A549 (cell line): ENCODE measurements at regions of chr14 and their contacts with region 1.

Region 1: GRCh38 chr14:54503476-54504257 is 6.0 kb upstream of the CGRRF1 start:
- DNase-seq: peak in 1 of 2 experiments; percentile 66
- ATAC-seq: peak; percentile 80 to 89
- H3K4me3 ChIP-seq: no peak overlapping the region
- H3K27ac ChIP-seq: 0 out of 6 replicates have a peak overlapping the region, but pooled peaks of 1 of the 2 experiments have one; percentile 39
- H3K4me1 ChIP-seq: no peaks in the 10 kb centered on the region; the same call in 2 of the 3 replicates
- CTCF ChIP-seq: peak; percentile 46
- EP300 ChIP-seq: no peak
- POLR2A ChIP-seq: no peak
- RAD21 ChIP-seq: peak; percentile 39 to 54; a peak in 4 of 5 replicates

Region 2: DNA sequence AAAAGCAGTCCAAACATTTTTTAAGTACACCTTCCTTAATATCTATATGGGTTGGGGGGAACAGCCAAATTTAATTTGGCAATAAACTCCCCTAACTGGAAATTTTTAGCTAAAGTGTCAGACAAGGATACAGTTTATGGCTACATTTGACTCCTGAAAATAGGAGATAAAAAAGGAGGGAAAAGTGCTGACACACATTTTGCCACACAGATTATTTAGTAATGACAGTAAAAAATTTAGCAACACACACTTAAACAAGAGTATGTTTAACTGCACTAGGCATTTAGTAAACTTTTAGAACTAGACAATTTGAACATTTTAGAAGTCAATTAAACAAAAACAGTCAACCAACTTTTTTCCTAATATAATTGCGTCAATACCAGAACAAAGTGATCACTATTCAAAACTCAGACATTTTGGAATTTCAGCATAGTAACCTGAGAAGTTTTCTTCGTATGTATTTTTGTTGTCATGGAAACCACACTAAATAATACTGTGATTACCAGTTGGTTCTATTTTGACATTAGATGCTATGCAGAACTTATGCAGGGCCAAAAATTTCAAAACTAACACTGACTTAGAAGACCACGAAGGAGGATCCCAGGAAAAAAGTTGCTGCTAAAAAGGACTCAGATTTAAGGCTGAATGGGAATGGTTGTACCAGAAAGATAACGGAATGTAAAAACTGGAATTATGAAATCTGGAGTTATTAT is 28.3 kb before region 1 on chr14:
- CTCF ChIA-PET with region 1: no interaction called
- POLR2A ChIA-PET with region 1: no interaction called
- DNase-seq: no peak
- ATAC-seq: no peak
- H3K4me3 ChIP-seq: no peak overlapping the region
- H3K27ac ChIP-seq: no peak overlapping the region
- H3K4me1 ChIP-seq: peaks cover 9% of the 10 kb centered on the region
- CTCF ChIP-seq: no peak
- EP300 ChIP-seq: no peak
- POLR2A ChIP-seq: no peak
- RAD21 ChIP-seq: no peak

Region 3: GRCh38 chr14:54488646-54489317 is 14.9 kb before region 1 on chr14 and contains the start of gene GMFB:
- CTCF ChIA-PET with region 1: interaction called, 66 read pairs
- POLR2A ChIA-PET with region 1: no interaction called
- DNase-seq: peak; percentile 79 to 94
- ATAC-seq: peak; percentile 95 to 97
- H3K4me3 ChIP-seq: peak within 1 kb of the TSS; percentile 84
- H3K27ac ChIP-seq: peak within 1 kb of the TSS; percentile 95 to 98
- H3K4me1 ChIP-seq: peaks cover 26% of the 10 kb centered on the region
- CTCF ChIP-seq: peak; percentile 37
- EP300 ChIP-seq: no peak
- POLR2A ChIP-seq: peak; percentile 69
- RAD21 ChIP-seq: 0 out of 5 replicates have a peak, but pooled peaks of 1 of the 2 experiments have one; percentile 8
- polyA plus RNA-seq, gene GMFB: 35.3 and 45.5 TPM in 2 replicates

Region 4: GRCh38 chr14:54642801-54643697 is 139.4 kb after region 1 on chr14:
- CTCF ChIA-PET with region 1: no interaction called
- POLR2A ChIA-PET with region 1: no interaction called
- DNase-seq: peak in 1 of 2 experiments; percentile 29
- ATAC-seq: peak in 1 of 2 experiments; percentile 66; a peak in 3 of 6 replicates
- H3K4me3 ChIP-seq: no peak overlapping the region
- H3K27ac ChIP-seq: 0 out of 6 replicates have a peak overlapping the region, but pooled peaks of 1 of the 2 experiments have one; percentile 2
- H3K4me1 ChIP-seq: peaks cover 10% of the 10 kb centered on the region
- CTCF ChIP-seq: peak; percentile 51
- EP300 ChIP-seq: no peak
- POLR2A ChIP-seq: no peak
- RAD21 ChIP-seq: peak; percentile 46 to 54